Calu3 (cell line): ENCODE measurements at regions of chr20 and their contacts with region 1.

Region 1: GRCh38 chr20:5205348-5206210 is 78.8 kb downstream of the CDS2 start:
- DNase-seq: peak; percentile 73
- H3K4me3 Mint-ChIP-seq: no peak overlapping the region
- H3K27ac Mint-ChIP-seq: no peak overlapping the region
- H3K4me1 Mint-ChIP-seq: no peaks in the 10 kb centered on the region
- H3K27me3 Mint-ChIP-seq: no peaks in the 10 kb centered on the region
- CTCF ChIP-seq: peak; percentile 61

Region 2: DNA sequence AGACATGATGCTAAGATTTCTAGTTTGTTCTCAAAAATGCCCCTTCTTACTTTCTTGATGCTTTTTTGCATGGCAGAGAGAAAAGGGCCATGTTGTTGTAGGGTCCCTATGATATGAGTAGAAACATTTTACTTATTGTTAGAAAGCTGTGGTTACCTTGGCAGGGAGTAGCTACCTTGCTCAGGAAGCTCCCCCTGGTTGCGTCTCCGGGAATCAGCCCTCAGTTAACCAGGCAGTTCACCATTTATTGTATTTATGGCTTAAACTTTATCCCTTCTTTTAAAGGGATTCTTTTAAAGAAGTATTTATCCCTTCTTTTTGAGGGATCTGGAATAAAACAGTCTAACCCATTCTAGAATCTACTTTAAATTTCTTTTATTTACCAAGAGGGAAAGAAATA is 225.1 kb after region 1 on chr20:
- CTCF ChIA-PET with region 1: interaction called, 4 read pairs
- intact Hi-C with region 1: loop called (anchors 5 kb)
- DNase-seq: no peak
- H3K4me3 Mint-ChIP-seq: no peak overlapping the region
- H3K27ac Mint-ChIP-seq: no peak overlapping the region
- H3K4me1 Mint-ChIP-seq: peaks cover 1% of the 10 kb centered on the region
- H3K27me3 Mint-ChIP-seq: peaks cover 36% of the 10 kb centered on the region
- CTCF ChIP-seq: no peak

Region 3: DNA sequence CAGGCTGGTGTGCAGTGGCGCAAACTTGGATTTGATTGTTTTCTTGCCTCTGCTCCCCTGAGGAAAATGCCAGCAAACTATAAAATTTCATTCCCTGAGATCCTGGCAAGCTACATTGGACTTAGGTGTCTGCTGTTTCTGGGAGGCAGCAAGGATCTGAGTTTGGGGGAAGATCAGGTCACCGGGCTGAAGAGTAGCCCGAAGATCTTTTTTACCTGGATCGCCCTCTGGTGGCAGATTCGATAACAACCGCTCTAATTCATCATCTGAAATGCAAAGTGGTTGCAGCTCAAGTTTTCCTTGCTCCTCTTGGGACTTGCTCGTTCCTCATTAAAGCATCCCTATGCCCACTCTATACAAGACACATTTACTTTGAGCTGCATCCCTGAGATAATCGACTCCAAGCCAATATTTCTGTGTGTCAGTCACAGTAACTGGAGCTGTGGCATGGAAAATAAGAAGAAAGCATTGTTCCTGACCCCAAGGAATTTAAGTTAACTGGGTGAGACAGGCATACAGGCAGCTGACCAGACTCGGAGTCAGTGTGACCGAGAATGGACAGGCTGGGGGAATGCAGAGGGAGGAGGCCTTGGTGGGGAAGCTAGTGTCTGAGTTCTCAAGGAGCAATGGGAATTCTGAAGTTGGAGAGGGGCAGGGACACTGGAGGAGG is 243.0 kb after region 1 on chr20:
- CTCF ChIA-PET with region 1: interaction called, 10 read pairs
- intact Hi-C with region 1: loop called (anchors 1 kb)
- DNase-seq: peak; percentile 60
- H3K4me3 Mint-ChIP-seq: no peak overlapping the region
- H3K27ac Mint-ChIP-seq: no peak overlapping the region
- H3K4me1 Mint-ChIP-seq: no peaks in the 10 kb centered on the region
- H3K27me3 Mint-ChIP-seq: peaks cover 44% of the 10 kb centered on the region
- CTCF ChIP-seq: no peak